Activated CD4-positive, alpha-beta memory T cell treated with anti-CD3 and anti-CD28 coated beads for 36 hours (primary cell): ENCODE measurements at regions of chr6 and their contacts with region 1.

Region 1: DNA sequence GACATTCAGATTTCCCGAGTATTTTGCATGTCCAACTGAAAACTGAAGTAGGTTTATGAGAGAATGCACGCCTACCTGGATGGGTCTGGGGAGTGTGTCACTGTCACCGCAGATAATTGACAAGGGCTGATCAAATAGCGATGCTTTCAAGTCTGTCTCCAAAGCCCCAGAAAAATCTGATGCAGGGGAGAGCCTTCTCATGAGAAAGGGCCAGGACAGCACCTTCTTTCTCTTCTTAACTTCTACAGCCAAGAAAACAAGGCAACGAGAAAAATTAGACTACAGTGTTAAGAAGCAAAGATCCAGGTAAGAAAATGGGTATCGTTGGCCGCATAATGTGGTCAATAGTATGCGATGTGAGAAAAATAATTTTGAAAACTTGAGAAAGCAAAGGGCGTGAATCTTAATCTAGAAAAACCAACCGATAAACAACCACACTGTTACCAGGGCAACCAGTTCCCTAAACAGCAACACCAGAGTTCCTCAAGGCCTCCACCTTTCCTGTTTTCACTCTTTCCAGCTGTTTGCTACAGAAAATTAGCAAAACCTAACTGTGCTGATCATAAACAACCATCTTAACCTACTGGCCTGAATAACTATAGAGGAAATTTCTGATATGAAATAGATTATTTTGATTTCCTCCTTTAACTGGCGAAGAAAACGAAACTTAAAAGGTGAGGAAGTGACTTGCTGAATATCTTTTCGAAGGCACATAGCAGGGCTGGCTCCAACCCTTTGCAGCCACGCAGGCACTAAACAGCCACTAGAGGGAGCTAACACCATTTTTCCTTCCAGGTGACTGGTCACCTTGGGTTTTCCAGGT is 2.6 kb downstream of the TAGAP start:
- DNase-seq: peak; percentile 86
- H3K4me3 Mint-ChIP-seq: peak overlapping the region; percentile 94
- H3K27ac Mint-ChIP-seq: peak overlapping the region; percentile 95
- H3K4me1 Mint-ChIP-seq: peaks cover 69% of the 10 kb centered on the region
- H3K27me3 Mint-ChIP-seq: no peaks in the 10 kb centered on the region

Region 2: DNA sequence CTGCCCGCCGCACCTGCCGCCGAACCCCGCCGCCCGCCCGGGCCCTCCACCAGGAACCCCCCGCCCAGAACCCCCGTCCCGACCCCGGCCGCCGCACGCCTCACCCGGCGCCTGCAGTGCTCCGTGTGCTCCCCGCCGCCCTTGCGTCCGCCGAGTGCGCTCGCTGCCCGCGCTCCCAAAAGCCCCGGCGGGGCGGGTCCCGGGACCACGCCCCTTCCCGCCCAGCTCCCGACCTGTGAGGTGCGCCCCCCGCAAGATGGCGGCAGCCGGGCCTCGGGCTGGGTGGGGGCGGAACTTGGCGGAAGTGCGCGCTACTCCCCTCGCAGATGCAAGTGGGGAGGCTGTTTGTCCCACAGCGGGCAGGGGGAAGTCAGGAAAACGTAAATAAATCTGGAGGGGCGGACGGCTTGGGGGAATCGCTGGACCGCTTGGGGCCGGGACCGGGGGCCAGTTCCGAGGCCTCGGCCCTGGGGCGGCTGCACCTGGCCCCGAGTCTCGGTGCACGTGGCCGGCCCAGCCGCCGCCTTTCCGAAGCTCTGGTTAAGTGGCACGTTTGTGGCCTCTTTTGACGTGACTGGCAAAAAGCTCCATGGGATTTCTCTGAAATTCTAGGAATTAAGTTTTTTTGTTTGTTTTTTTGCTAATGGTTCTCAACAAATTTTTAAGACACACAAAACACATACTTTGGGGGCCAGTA is 222.9 kb before region 1 on chr6 and contains the start of gene EZR:
- CTCF ChIA-PET with region 1: no interaction called
- POLR2A ChIA-PET with region 1: no interaction called
- intact Hi-C with region 1: loop called (anchors 2 kb)
- DNase-seq: peak; percentile 91
- H3K4me3 Mint-ChIP-seq: peak within 1 kb of the TSS; percentile 100
- H3K27ac Mint-ChIP-seq: peak within 1 kb of the TSS; percentile 99
- H3K4me1 Mint-ChIP-seq: peaks cover 43% of the 10 kb centered on the region
- H3K27me3 Mint-ChIP-seq: no peaks in the 10 kb centered on the region
- total RNA-seq, gene EZR: 255 to 256 TPM

Region 3: GRCh38 chr6:158894193-158894592 is 148.0 kb before region 1 on chr6:
- CTCF ChIA-PET with region 1: no interaction called
- POLR2A ChIA-PET with region 1: no interaction called
- intact Hi-C with region 1: no loop called
- DNase-seq: no peak
- H3K4me3 Mint-ChIP-seq: no peak overlapping the region
- H3K27ac Mint-ChIP-seq: no peak overlapping the region
- H3K4me1 Mint-ChIP-seq: no peaks in the 10 kb centered on the region
- H3K27me3 Mint-ChIP-seq: no peaks in the 10 kb centered on the region

Region 4: GRCh38 chr6:158999666-159000403 is 42.4 kb before region 1 on chr6 and contains the start of gene RSPH3:
- CTCF ChIA-PET with region 1: interaction called, 11 read pairs
- POLR2A ChIA-PET with region 1: interaction called, 8 read pairs
- intact Hi-C with region 1: loop called (anchors 2 kb)
- DNase-seq: peak; percentile 97
- H3K4me3 Mint-ChIP-seq: peak within 1 kb of the TSS; percentile 97
- H3K27ac Mint-ChIP-seq: peak within 1 kb of the TSS; percentile 86
- H3K4me1 Mint-ChIP-seq: peaks cover 34% of the 10 kb centered on the region
- H3K27me3 Mint-ChIP-seq: no peaks in the 10 kb centered on the region
- total RNA-seq, gene RSPH3: 6.1 to 6.8 TPM

Region 5: GRCh38 chr6:159031846-159032245 is 10.4 kb before region 1 on chr6:
- CTCF ChIA-PET with region 1: no interaction called
- POLR2A ChIA-PET with region 1: no interaction called
- intact Hi-C with region 1: no loop called
- DNase-seq: no peak
- H3K4me3 Mint-ChIP-seq: no peak overlapping the region
- H3K27ac Mint-ChIP-seq: no peak overlapping the region
- H3K4me1 Mint-ChIP-seq: peaks cover 28% of the 10 kb centered on the region
- H3K27me3 Mint-ChIP-seq: no peaks in the 10 kb centered on the region

Region 6: DNA sequence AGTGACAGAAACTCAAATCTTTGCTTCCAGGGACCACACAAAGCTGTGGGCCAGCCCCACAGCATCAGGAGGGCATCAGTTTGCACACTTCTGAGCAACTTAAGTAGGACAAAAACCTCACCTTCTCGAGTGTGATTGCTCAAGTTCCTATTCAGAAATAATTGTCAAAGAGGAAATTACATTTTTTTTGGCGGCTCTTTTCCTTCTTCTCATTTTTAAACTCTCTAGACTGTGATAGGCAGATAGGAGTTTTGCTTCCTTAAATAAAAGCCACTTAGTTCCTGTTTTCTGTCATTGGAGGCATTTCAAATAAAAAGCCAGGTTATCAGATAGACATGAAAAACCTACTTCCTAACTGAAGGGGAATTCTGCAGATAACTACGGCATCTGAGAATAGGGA is 13.8 kb after region 1 on chr6:
- CTCF ChIA-PET with region 1: interaction called, 93 read pairs
- POLR2A ChIA-PET with region 1: interaction called, 69 read pairs
- intact Hi-C with region 1: no loop called
- DNase-seq: no peak
- H3K4me3 Mint-ChIP-seq: no peak overlapping the region
- H3K27ac Mint-ChIP-seq: peak overlapping the region; percentile 53
- H3K4me1 Mint-ChIP-seq: peaks cover 73% of the 10 kb centered on the region
- H3K27me3 Mint-ChIP-seq: no peaks in the 10 kb centered on the region

Region 7: DNA sequence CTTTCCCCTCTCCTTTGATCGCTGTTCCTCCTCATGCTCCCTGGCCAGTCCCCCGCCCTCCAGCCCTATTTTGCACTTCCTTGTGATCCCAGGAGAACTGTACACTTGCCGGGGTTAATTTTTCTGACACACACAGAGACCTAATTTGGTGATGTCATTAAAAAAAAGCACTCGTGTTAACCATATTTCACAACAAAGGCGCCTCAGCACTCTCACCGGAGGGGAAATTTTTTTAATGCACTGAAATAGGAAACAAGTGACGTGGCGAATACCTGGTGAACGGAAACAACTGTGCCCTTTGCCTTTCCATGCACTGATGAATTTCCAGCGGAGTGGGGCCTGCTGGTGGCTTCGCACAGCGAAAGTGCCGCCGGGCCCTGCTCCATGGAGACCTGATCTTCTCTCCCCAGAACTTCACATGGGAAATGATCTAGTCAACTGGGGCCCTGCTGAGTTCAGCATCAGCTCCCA is 56.5 kb after region 1 on chr6:
- CTCF ChIA-PET with region 1: interaction called, 370 read pairs
- POLR2A ChIA-PET with region 1: interaction called, 27 read pairs
- intact Hi-C with region 1: loop called (anchors 1 kb)
- DNase-seq: peak; percentile 83
- H3K4me3 Mint-ChIP-seq: peak overlapping the region; percentile 63
- H3K27ac Mint-ChIP-seq: peak overlapping the region; percentile 87
- H3K4me1 Mint-ChIP-seq: peaks cover 79% of the 10 kb centered on the region
- H3K27me3 Mint-ChIP-seq: no peaks in the 10 kb centered on the region

Region 8: GRCh38 chr6:159134701-159135364 is 92.6 kb after region 1 on chr6:
- CTCF ChIA-PET with region 1: interaction called, 17 read pairs
- POLR2A ChIA-PET with region 1: no interaction called
- intact Hi-C with region 1: no loop called
- DNase-seq: peak; percentile 85
- H3K4me3 Mint-ChIP-seq: no peak overlapping the region
- H3K27ac Mint-ChIP-seq: no peak overlapping the region
- H3K4me1 Mint-ChIP-seq: no peaks in the 10 kb centered on the region
- H3K27me3 Mint-ChIP-seq: peaks cover 7% of the 10 kb centered on the region